ENCODE measurements at regions of chr1 and their contacts with region 1.

Region 1: GRCh38 chr1:77970192-77970591 is 8.7 kb downstream of the FUBP1 start:
- DNase-seq: no peak
- H3K4me3 ChIP-seq: no peak overlapping the region
- H3K27ac ChIP-seq: no peak overlapping the region
- H3K4me1 ChIP-seq: peaks cover 4% of the 10 kb centered on the region
- H3K27me3 ChIP-seq: no peaks in the 10 kb centered on the region
- CTCF ChIP-seq: no peak
- POLR2A ChIP-seq: no peak

Region 2: DNA sequence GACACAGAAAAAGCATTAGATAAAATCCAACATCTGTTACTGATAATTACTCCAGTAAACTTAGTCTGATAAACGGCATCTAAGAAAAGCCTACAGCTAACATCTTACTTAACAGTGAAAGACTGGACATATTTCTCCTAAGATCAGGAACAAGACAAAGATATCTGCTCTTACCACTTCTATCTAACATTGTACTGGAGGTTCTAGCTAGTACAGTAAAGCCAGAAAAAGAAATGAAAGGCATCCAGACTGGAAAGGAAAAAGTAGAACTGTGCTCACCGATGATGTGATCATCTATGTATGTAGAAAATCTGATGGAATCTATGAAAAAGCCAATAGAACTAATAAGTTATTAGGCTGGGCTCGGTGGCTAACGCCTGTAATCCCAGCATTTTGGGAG is 60.1 kb before region 1 on chr1:
- CTCF ChIA-PET with region 1: no interaction called
- POLR2A ChIA-PET with region 1: no interaction called
- dilution Hi-C with region 1: no loop called
- intact Hi-C with region 1: no loop called
- DNase-seq: no peak
- H3K4me3 ChIP-seq: no peak overlapping the region
- H3K27ac ChIP-seq: no peak overlapping the region
- H3K4me1 ChIP-seq: no peaks in the 10 kb centered on the region
- H3K27me3 ChIP-seq: no peaks in the 10 kb centered on the region
- CTCF ChIP-seq: no peak
- POLR2A ChIP-seq: no peak

Region 3: GRCh38 chr1:77948841-77949424 is 21.3 kb before region 1 on chr1:
- CTCF ChIA-PET with region 1: no interaction called
- POLR2A ChIA-PET with region 1: no interaction called
- dilution Hi-C with region 1: no loop called
- intact Hi-C with region 1: loop called (anchors 2 kb)
- DNase-seq: peak; percentile 74
- H3K4me3 ChIP-seq: peak overlapping the region in 1 of 3 experiments; percentile 28
- H3K27ac ChIP-seq: peak overlapping the region; percentile 18
- H3K4me1 ChIP-seq: peaks cover 15% of the 10 kb centered on the region
- H3K27me3 ChIP-seq: no peaks in the 10 kb centered on the region
- CTCF ChIP-seq: peak; percentile 18 to 30
- POLR2A ChIP-seq: peak; percentile 34

Measured in endothelial cell of umbilical vein (primary cell).